GM23248 (cell line): ENCODE measurements at regions of chr11 and their contacts with region 1.

Region 1: GRCh38 chr11:70755410-70756161 is 357.3 kb downstream of the CTTN start:
- DNase-seq: peak; percentile 80
- H3K4me3 ChIP-seq: no peak overlapping the region
- H3K27ac ChIP-seq: no peak overlapping the region
- H3K4me1 ChIP-seq: no peaks in the 10 kb centered on the region
- H3K27me3 ChIP-seq: peaks cover 5% of the 10 kb centered on the region; the same call in 1 of the 2 replicates

Region 2: GRCh38 chr11:70471254-70471653 is 284.3 kb before region 1 on chr11:
- in situ Hi-C with region 1: loop called (anchors 10 kb)
- DNase-seq: peak; percentile 29
- H3K4me3 ChIP-seq: no peak overlapping the region
- H3K27ac ChIP-seq: no peak overlapping the region
- H3K4me1 ChIP-seq: no peaks in the 10 kb centered on the region
- H3K27me3 ChIP-seq: peaks cover 16% of the 10 kb centered on the region

Region 3: DNA sequence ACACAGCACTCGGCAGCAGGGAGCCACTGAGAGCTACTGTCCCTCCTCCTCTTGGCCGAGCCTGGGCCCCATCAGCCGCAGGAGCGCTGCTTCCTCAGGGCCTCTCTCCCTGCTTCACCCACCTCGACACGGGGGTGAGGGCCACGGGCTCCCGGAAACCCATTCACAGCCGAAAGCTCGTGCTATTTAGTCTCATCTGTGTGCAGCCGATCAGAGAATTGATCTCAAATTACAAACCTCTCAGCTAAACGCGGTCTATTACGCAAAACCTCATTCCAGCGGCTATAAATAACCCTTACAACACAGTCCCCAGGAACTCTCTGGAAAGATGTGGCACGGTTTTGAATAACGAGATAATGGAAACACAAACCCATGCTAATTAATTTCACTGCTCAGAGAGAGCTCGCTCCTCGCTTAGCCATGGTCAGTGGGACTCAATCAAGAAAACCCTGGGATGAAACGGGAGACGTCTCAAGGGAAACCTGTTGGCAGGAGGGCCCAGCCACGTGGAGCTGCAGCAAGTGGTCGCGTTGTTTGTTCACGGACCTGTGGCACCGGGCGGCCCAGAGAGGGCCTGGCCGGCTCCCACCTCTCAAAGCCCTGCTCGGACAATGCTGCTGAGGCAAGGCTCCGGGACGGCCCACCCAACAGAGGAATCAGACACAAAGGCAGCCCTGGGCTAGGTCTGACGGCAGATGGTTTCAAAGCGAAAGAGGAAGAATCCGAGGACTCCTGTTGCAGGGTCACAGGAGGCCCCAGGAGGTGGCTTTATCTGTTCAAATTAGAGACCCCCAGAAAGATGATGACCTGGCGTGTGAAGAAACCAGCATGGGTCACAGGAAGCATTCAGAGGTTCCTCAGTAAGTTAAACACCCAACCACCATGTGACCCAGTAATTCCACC is 146.8 kb before region 1 on chr11:
- in situ Hi-C with region 1: no loop called
- DNase-seq: peak; percentile 56
- H3K4me3 ChIP-seq: no peak overlapping the region
- H3K27ac ChIP-seq: no peak overlapping the region
- H3K4me1 ChIP-seq: no peaks in the 10 kb centered on the region
- H3K27me3 ChIP-seq: no peaks in the 10 kb centered on the region; the same call in 1 of the 2 replicates